ENCODE measurements at regions of chr6 and their contacts with region 1.

Region 1: GRCh38 chr6:111743862-111744692 is 129.2 kb downstream of the FYN start:
- DNase-seq: no peak
- ATAC-seq: peak; percentile 92

Region 2: DNA sequence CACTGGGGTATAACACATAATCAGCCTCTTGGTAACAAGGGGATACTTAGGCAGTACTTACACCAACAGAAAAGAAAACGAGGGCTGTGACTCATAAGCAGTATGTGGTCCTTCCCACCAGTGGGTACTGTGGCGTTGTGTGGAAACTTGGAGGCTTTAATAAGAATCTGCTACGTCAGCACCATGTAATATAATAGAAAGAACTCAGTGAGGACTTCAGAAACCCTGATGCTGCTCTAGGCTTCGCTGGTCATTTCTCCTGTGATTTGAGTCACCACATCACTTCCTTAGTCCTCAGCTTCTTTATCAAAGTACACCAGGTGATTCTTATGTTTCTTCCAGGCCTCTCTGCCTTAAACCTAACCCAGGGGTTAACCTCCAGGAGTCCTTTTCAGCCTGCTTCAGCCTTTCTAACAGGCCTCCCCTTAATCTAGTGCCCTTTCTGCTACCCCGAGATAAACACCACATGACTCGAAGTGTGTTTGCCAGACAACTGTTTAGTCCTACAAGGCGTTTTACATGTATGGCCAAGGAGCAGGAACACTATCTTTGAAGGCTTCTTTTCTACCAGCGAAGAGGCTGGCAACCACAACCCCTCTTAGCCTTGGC is 60.7 kb after region 1 on chr6:
- intact Hi-C with region 1: loop called (anchors 5 kb)
- DNase-seq: no peak
- ATAC-seq: peak; percentile 73